ENCODE measurements at regions of chr5 and their contacts with region 1.

Region 1: DNA sequence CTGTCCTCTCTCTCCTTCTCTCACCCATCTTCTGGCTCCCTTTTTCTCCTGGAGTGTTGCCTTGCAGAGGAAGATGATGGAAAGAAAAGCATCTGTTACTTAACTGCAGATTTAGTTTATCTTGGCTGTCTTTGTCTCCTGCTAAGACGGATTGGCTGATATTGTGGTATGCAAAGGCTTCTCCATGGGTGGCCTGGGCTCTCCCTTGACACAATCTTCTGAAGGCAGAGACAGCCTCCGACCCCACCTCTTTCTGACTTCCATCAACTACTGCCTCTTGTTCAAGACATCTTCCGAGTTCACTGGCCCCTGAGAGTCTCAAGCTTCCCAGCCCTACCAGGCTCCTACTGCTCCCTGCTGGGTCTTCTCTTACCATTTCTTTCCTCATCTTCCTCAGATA is 403.7 kb downstream of the LRRC70 start:
- DNase-seq: no peak
- ATAC-seq: peak; percentile 98

Region 2: DNA sequence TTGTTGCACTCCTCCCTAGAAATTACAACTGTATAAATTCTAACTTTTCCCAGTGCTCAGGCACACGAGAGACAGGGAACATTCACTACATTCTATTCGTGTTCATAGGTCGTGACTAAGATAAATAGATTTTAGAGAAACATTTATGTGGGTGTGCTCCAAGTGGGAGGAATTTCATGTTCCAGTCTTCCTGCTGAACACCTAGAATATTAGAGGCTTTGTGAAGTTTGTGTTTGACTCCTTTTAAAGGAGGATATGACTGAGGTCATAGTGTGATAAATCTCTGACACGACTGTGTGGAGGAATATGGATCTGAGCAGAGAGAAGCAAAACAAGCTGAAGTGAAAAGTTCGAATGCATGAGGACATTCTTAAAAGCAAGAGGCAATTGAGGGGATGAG is 1295.0 kb before region 1 on chr5:
- intact Hi-C with region 1: no loop called
- DNase-seq: no peak
- ATAC-seq: no peak

Region 3: GRCh38 chr5:61901997-61902396 is 1080.4 kb before region 1 on chr5:
- intact Hi-C with region 1: loop called (anchors 5 kb)
- DNase-seq: no peak
- ATAC-seq: no peak